ENCODE measurements at regions of chrX and their contacts with region 1.

Region 1: GRCh38 chrX:103464774-103465117 is 54.5 kb downstream of the RAB40A start:
- DNase-seq: peak; percentile 71 to 84 (median 76)
- ATAC-seq: peak; percentile 95
- H3K4me3 ChIP-seq: no peak overlapping the region
- H3K27ac ChIP-seq: no peak overlapping the region
- H3K4me1 ChIP-seq: no peaks in the 10 kb centered on the region
- H3K27me3 ChIP-seq: no peaks in the 10 kb centered on the region
- CTCF ChIP-seq: peak; percentile 22 to 76 (median 66)
- POLR2A ChIP-seq: no peak

Region 2: DNA sequence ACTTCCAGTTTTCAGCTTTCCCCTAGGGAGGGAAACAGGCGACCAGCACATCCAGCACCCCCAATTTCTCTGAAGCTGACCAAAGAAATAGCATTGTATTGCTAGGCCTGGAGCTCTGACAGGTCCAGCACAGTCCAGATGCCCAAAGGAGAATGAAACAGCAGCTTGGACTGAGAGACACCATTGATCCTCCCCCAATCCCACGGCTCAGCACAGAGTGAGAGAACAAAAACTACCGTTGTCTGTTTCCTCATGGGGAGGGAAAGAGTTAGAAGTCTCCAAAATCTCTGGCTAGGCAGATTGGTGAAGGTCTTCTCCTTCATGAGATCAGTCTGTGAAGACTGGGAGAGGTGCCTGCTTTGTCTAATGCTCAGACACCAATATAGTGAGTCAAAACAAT is 126.1 kb before region 1 on chrX:
- intact Hi-C with region 1: loop called (anchors 5 kb)
- DNase-seq: no peak
- ATAC-seq: no peak
- H3K4me3 ChIP-seq: no peak overlapping the region
- H3K27ac ChIP-seq: no peak overlapping the region
- H3K4me1 ChIP-seq: no peaks in the 10 kb centered on the region
- H3K27me3 ChIP-seq: no peaks in the 10 kb centered on the region
- CTCF ChIP-seq: no peak
- POLR2A ChIP-seq: no peak

Measured in body of pancreas (tissue), 4 donors.